ENCODE measurements at regions of chr20 and their contacts with region 1.

Region 1: DNA sequence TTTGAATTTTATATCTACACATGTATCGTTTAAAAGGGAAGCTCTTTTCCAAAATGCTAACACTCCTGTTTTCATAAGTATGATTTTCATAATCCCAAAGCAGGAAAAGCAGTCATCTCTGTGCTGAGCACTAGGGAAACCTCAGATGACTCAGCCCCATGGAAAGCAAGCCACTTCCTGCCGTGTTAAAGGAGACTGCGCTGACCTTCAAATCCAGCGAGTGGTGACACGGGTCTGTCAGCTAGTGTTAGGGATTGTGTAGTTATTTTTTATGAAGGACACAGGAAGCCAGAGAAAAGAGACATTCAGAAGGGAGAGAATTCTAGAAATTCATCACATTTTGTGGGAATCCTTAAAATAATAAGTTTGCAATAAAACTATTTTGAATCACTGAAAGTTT is 57.0 kb upstream of the CD93 start:
- DNase-seq: peak; percentile 68 to 92
- H3K4me3 ChIP-seq: no peak overlapping the region
- H3K27ac ChIP-seq: peak overlapping the region; percentile 93 to 96
- H3K4me1 ChIP-seq: peaks cover 11 to 51% of the 10 kb centered on the region in 2 donors
- H3K27me3 ChIP-seq: no peaks in the 10 kb centered on the region
- CTCF ChIP-seq: no peak

Region 2: GRCh38 chr20:22529150-22530019 is 613.7 kb before region 1 on chr20:
- intact Hi-C with region 1: no loop called
- DNase-seq: no peak
- H3K4me3 ChIP-seq: no peak overlapping the region
- H3K27ac ChIP-seq: no peak overlapping the region
- H3K4me1 ChIP-seq: no peaks in the 10 kb centered on the region
- H3K27me3 ChIP-seq: no peaks in the 10 kb centered on the region
- CTCF ChIP-seq: no peak

Region 3: DNA sequence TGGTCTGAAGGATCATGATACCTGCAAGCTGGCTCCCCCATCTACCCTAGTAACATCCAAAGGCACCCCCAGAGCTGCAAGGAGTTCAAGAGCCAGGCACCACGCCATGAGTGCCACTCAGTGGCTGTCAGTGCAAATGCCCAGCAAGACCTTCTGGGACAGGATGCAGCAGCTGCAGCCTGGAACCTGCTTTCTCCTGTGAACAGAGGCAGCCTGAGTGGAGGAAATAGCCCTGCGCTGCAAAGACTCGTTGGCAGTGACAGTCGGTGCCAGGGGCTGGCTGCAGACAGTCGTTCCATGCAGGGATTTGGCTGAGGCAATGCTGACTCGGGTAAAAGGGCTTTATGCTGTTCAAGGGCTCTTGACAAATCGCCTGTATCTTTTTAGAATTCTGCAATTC is 123.7 kb before region 1 on chr20:
- intact Hi-C with region 1: no loop called
- DNase-seq: no peak
- H3K4me3 ChIP-seq: no peak overlapping the region
- H3K27ac ChIP-seq: no peak overlapping the region
- H3K4me1 ChIP-seq: no peaks in the 10 kb centered on the region
- H3K27me3 ChIP-seq: no peaks in the 10 kb centered on the region
- CTCF ChIP-seq: no peak

Region 4: DNA sequence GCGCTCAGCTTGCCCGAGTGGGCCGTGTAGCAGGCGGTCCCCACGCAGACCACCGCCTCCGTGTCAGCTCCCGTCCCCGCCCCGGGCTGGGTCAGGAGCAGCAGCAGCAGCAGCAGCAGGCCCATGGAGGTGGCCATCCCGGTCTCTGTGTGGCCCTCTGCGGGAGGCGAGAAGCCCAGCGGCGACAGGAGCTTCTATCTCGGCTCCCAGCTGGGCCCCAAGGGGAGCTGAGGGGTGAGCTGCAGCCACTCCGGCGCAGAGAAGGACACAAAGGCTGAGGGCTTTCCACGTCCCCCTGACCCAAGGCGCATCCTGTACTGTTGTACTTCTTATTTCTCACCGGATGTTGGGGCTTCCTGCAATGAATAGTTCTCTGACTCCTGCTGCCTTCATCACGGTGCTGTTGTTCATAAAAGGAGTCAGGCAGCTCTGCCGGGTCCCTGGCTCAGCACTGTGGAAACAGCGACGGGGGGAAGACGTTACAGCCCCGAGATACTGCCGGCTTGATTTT is 57.0 kb before region 1 on chr20 and contains the start of gene CD93:
- intact Hi-C with region 1: loop called (anchors 2 kb)
- DNase-seq: peak in 1 of 2 donors; percentile 87
- H3K4me3 ChIP-seq: peak within 1 kb of the TSS; percentile 29 to 44
- H3K27ac ChIP-seq: peak within 1 kb of the TSS; percentile 90 to 99
- H3K4me1 ChIP-seq: peaks cover 8 to 42% of the 10 kb centered on the region in 2 donors
- H3K27me3 ChIP-seq: no peaks in the 10 kb centered on the region
- CTCF ChIP-seq: no peak
- total RNA-seq, gene CD93: 206 TPM

Region 5: GRCh38 chr20:23156170-23156841 is 13.2 kb after region 1 on chr20:
- intact Hi-C with region 1: loop called (anchors 2 kb)
- DNase-seq: peak; percentile 63 to 87
- H3K4me3 ChIP-seq: no peak overlapping the region
- H3K27ac ChIP-seq: peak overlapping the region; percentile 93 to 96
- H3K4me1 ChIP-seq: peaks cover 17 to 79% of the 10 kb centered on the region in 2 donors
- H3K27me3 ChIP-seq: no peaks in the 10 kb centered on the region
- CTCF ChIP-seq: no peak

Region 6: DNA sequence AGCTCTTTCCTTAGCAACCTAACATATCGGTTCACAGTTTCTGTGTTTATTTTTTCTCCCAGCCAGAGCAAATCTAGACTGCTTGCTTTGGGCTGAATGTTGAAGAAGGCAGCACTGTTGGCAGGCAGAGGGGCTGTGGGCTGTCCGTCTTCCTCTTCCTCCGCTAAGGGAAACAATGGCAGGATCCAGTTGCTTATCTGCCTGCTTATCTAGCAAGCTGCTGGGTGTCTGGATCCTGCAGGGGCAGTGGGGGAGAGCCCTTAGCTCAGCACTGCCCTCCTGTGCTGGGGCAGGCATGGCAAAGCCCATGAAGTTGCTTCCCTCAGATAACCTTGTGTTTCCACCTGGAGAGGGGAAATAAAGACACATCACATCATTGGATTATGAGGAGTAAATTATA is 35.7 kb after region 1 on chr20:
- intact Hi-C with region 1: no loop called
- DNase-seq: peak in 1 of 2 donors; percentile 59
- H3K4me3 ChIP-seq: no peak overlapping the region
- H3K27ac ChIP-seq: peak overlapping the region in 1 of 2 donors; percentile 13
- H3K4me1 ChIP-seq: no peaks in the 10 kb centered on the region
- H3K27me3 ChIP-seq: no peaks in the 10 kb centered on the region
- CTCF ChIP-seq: no peak

Region 7: DNA sequence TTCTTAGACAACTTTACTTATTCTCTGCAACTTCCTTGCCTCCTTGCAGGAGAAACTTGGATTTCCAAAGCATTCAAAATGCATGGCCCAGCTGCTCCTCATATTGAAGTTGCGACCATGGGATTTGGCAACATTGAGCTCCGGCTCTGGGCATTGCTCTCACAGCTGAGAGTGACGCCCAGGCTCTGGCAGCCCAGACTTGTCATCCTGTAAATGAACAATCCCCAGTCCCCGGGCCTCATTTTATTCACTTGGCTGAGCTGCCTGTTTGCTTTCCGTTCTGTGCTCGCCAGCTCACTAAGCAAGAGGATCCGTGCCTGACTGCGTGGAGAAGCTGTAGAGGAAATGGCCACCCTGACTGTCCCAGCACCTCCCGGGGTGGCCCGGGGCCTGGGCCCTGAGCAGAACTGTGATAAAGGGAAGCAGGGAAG is 62.5 kb after region 1 on chr20:
- intact Hi-C with region 1: loop called (anchors 5 kb)
- DNase-seq: peak; percentile 44 to 88
- H3K4me3 ChIP-seq: no peak overlapping the region
- H3K27ac ChIP-seq: peak overlapping the region; percentile 75 to 92
- H3K4me1 ChIP-seq: peaks cover 0 to 22% of the 10 kb centered on the region in 2 donors
- H3K27me3 ChIP-seq: no peaks in the 10 kb centered on the region
- CTCF ChIP-seq: no peak

Region 8: DNA sequence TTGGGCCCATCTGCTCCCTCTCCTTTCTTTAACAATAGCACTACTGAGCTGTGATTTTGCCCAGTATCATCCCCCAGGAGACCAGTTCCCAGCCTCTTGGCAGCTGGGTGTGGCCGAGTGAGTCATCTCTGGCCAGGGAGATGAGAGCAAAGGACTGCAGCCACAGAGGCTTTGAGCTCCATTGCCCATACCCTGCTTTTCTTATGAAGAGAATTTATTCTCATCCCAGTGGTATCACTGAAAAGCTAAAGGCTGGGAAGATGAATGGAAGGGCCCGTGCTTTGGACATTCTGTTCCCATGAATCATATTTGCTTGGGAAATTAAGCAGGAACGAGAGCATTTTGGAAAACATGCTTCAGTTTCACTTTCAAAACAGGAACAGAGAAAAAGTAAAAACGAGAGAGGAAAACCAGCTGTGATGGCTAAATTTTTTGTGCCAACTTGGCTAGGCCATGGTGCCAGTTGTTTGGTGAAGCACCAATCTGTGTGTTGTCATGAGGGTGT is 479.8 kb after region 1 on chr20:
- intact Hi-C with region 1: no loop called
- DNase-seq: peak; percentile 50 to 88
- H3K4me3 ChIP-seq: peak overlapping the region; percentile 34 to 55
- H3K27ac ChIP-seq: peak overlapping the region; percentile 88 to 91
- H3K4me1 ChIP-seq: peaks cover 0 to 17% of the 10 kb centered on the region in 2 donors
- H3K27me3 ChIP-seq: no peaks in the 10 kb centered on the region
- CTCF ChIP-seq: no peak